GM18951 (cell line): ENCODE measurements at regions of chr9 and their contacts with region 1.

Region 1: GRCh38 chr9:126690431-126691350 is 77.0 kb downstream of the LMX1B start:
- POLR2A ChIP-seq: no peak

Region 2: GRCh38 chr9:126611592-126612325 is 78.9 kb before region 1 on chr9:
- in situ Hi-C with region 1: loop called (anchors 5 kb)
- POLR2A ChIP-seq: no peak

Region 3: DNA sequence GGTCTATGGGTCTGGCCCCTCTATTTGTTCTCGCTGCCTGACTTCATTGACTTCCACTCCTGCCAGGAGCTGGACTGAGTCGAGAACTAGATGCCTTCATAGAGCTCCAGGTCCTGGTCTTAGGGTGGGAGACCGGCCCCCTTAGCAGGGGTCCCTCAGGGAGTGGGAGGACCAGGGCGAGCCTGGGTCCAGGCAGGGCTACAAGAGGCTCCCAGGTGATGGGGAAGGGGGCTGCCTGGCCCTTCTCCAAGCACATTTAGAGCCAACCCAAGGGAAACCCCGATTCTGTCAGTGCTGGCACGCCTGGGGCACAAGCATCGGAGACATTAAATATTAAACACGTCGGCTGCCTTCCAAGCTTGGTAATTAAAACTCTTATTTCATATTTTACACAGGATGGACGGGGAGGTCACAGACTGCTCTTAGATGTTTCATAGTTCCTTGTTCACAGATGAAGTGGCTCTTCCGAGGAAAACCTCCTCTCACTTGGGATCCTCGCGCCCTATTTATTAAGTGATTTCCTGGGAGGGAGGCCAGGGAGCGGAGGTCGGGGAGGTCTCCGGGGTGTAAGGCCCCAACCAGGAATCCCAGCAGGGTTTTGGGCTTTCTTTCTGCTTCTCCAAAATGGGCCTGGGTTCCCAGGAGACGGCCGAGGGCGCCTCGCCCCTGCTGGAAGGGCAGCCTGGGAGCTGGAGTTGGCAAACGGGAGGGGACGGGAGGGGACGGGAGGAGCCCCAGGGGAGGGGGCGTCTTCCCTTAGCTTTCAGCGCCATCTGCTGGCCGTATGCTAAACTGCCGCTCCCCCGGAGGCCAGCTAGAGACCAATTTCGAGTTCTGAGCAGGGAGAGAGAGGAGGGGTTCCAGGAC is 90.7 kb after region 1 on chr9:
- in situ Hi-C with region 1: loop called (anchors 5 kb)
- POLR2A ChIP-seq: no peak

Region 4: DNA sequence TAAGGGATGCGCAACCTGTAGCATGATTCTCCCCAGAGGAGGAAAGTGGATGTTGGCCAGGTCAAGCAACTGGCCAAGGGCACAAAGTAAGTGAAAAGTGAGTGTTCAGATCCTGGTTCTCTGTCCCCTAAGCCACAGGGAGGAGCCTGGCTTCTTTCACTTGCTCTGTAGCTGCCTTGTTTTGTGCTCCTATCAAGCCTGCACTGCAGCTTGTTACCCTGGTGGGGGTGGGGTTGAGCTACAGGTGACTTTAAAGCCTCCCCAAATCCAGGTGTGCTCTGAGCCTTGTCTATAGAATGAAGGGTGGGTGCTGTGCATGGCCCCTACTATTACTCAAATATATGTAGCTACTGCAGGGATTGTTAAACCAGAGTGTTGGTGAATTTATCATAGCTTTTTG is 256.8 kb after region 1 on chr9:
- in situ Hi-C with region 1: no loop called
- POLR2A ChIP-seq: no peak